ENCODE measurements at regions of chr9 and their contacts with region 1.

Region 1: GRCh38 chr9:128249908-128250838 is 25.6 kb downstream of the GOLGA2 start:
- DNase-seq: peak; percentile 93 to 100
- H3K4me3 ChIP-seq: peak overlapping the region; percentile 59 to 83 (median 63)
- H3K27ac ChIP-seq: no peak overlapping the region
- H3K4me1 ChIP-seq: peaks cover 7 to 10% (median 9%) of the 10 kb centered on the region in 4 experiments
- H3K27me3 ChIP-seq: no peaks in the 10 kb centered on the region; a peak in 1 of 7 replicates
- CTCF ChIP-seq: no peak
- EP300 ChIP-seq: peak in 1 of 2 experiments; percentile 29; a peak in 1 of 3 replicates
- POLR2A ChIP-seq: peak in 1 of 2 experiments; percentile 60; a peak in 2 of 3 replicates
- RAD21 ChIP-seq: no peak

Region 2: GRCh38 chr9:128136816-128137793 is 113.1 kb before region 1 on chr9:
- CTCF ChIA-PET with region 1: no interaction called
- POLR2A ChIA-PET with region 1: no interaction called
- DNase-seq: no peak
- H3K4me3 ChIP-seq: no peak overlapping the region
- H3K27ac ChIP-seq: no peak overlapping the region
- H3K4me1 ChIP-seq: no peaks in the 10 kb centered on the region
- H3K27me3 ChIP-seq: no peaks in the 10 kb centered on the region
- CTCF ChIP-seq: no peak
- EP300 ChIP-seq: no peak
- POLR2A ChIP-seq: no peak
- RAD21 ChIP-seq: no peak

Region 3: GRCh38 chr9:128271108-128271507 is 20.9 kb after region 1 on chr9:
- CTCF ChIA-PET with region 1: interaction called, 58 read pairs
- POLR2A ChIA-PET with region 1: interaction called, 7 read pairs
- DNase-seq: no peak
- H3K4me3 ChIP-seq: no peak overlapping the region
- H3K27ac ChIP-seq: no peak overlapping the region
- H3K4me1 ChIP-seq: peaks cover 0 to 4% (median 0%) of the 10 kb centered on the region in 4 experiments; a peak in 1 of 7 replicates
- H3K27me3 ChIP-seq: peaks cover 0 to 3% (median 0%) of the 10 kb centered on the region in 4 experiments; a peak in 1 of 7 replicates
- CTCF ChIP-seq: no peak
- EP300 ChIP-seq: no peak
- POLR2A ChIP-seq: no peak
- RAD21 ChIP-seq: no peak

Measured in H1 (cell line).